MCF 10A (cell line): ENCODE measurements at regions of chr11 and their contacts with region 1.

Region 1: DNA sequence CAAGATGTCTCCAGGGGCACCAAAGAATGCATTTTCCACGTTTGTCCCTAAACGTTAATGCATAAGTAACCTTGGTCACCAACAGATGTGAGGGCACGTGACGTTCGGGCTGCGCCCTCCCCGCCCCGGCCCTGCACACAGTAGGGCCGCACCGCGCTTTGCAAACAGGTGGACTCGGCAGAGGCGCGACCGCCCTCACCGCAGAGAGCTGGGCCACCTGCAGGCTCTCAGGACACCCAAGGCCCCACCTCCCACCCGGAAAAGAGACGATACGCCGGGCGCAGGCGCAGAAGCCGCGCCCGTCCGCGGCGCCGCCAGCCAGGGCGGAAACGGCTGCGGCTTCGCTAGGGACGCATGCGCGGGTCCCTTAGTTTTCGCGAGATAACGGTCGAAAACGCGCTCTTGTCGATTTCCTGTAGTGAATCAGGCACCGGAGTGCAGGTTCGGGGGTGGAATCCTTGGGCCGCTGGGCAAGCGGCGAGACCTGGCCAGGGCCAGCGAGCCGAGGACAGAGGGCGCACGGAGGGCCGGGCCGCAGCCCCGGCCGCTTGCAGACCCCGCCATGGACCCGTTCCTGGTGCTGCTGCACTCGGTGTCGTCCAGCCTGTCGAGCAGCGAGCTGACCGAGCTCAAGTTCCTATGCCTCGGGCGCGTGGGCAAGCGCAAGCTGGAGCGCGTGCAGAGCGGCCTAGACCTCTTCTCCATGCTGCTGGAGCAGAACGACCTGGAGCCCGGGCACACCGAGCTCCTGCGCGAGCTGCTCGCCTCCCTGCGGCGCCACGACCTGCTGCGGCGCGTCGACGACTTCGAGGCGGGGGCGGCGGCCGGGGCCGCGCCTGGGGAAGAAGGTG is at the start of gene FADD:
- DNase-seq: peak; percentile 95
- H3K4me3 Mint-ChIP-seq: peak within 1 kb of the TSS; percentile 83
- H3K27ac Mint-ChIP-seq: peak within 1 kb of the TSS; percentile 83
- H3K4me1 Mint-ChIP-seq: peaks cover 26% of the 10 kb centered on the region
- H3K27me3 Mint-ChIP-seq: no peaks in the 10 kb centered on the region
- CTCF ChIP-seq: no peak
- total RNA-seq, gene FADD: 37.1 and 44.1 TPM in 2 replicates

Region 2: DNA sequence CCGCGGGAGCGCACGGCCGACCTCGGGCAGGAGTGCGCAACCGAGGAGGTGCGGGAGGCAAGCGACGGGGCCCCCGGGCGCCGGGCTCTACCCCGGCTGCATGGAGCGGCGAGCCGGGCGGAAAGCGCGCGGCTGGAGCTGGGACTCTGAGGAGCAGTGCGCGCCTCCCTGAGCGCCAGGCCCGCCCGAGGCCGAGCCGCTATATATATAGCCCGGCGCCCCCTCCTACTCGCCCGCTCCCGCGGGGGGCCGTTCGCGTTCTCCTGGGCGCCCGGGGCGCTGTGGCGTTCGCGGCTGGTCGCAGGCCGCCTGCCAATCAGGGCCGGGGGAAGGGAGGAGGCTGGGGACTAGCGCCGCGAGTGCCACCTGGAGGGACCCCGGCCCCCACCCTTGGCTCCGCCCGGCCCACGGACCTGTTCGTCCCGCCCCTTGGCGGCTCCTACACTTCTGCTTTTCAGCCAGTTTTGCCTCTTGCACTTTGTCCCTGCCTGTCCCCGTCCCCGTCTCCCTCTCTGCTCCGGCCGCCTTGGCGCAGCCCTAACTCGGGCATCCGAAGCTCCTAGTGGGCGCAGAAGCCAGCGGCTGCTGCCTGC is 427.9 kb before region 1 on chr11 and contains the start of gene FGF4:
- CTCF ChIA-PET with region 1: no interaction called
- POLR2A ChIA-PET with region 1: no interaction called
- intact Hi-C with region 1: no loop called
- DNase-seq: no peak
- H3K4me3 Mint-ChIP-seq: no peak within 1 kb of the TSS
- H3K27ac Mint-ChIP-seq: no peak within 1 kb of the TSS
- H3K4me1 Mint-ChIP-seq: no peaks in the 10 kb centered on the region
- H3K27me3 Mint-ChIP-seq: peaks cover 27% of the 10 kb centered on the region
- CTCF ChIP-seq: no peak
- total RNA-seq, gene FGF4: not detected in 2 replicates

Region 3: DNA sequence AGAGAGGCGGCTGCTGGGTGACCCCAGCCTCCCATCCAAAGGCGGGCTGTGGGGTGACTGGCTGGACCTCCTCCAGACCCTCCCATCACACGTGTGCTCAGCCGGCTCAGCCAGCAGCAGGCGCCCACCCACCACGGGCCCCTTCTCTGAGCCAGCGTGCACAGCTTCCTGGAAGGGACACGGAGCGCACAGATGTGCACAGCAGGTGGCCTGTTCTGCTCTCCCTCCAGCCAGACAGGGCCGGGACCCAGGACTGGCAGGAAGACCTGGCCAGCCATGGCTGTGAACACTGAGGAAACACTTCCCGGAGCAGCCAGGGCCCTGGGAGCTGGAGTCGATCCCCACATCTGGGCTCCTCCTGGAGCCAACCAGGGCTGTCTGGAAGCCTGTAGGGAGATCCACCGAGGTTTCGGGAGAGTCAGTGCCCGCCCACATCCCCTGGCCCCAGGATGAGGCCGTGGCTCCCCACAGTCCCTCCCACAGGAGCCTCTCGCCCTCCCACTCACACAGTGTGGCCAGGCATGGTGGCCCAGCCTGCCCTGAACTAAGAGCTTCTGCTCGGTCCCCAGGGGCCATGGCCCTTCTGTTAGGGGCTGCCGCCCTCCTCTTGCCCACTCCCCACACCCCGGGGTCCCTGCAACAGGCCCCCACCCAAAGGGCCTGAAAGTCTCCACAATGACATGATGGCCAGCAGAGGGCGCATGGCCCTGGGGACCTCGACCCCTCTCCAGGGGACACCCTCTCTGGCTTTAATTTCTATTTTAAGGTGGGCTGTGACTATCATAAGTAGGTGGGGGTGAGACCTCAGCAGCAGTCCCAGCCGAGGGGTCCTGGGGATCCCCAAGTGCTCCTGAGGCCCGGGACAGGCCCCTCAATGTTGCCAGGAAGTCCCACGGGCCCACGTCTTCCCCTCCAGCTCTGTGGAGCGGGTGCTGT is 293.3 kb before region 1 on chr11:
- CTCF ChIA-PET with region 1: interaction called, 19 read pairs
- POLR2A ChIA-PET with region 1: no interaction called
- intact Hi-C with region 1: no loop called
- DNase-seq: no peak
- H3K4me3 Mint-ChIP-seq: no peak overlapping the region
- H3K27ac Mint-ChIP-seq: no peak overlapping the region
- H3K4me1 Mint-ChIP-seq: peaks cover 1% of the 10 kb centered on the region
- H3K27me3 Mint-ChIP-seq: peaks cover 12% of the 10 kb centered on the region
- CTCF ChIP-seq: peak; percentile 78

Region 4: DNA sequence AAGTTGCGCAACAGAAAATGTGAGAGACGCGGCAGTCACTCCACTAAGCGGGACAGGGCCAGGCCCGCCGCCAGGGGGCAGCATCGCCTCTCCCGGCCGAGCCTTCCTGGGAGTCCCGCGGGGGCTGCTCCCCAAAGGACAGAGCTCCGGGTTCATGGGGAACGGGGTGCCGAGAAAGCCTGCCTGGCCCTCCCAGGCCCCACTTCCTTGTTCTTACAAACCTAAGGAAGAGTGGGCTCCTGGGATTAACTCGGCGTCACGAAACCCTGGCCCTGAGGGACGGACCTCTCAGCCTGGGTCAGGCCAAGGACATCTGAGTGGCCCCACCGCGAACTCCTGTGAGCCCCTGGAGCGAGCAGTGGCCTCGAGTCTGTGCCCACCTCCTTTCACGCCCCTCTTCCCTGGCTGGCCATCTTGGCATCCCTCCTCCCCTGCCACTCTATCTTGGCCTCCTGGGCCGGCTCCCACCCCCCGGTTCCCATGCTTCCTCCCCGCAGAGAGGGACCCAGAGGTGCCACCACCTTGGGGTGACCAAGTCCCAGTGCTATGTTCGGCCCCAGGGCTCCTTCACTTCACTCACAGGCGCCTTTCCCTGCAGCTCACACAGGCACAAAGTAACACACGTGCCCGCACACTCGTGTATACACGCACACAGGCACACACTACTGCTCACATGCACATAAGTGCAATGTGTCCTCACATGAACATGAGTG is 284.0 kb before region 1 on chr11:
- CTCF ChIA-PET with region 1: interaction called, 27 read pairs
- POLR2A ChIA-PET with region 1: interaction called, 3 read pairs
- intact Hi-C with region 1: no loop called
- DNase-seq: peak; percentile 70
- H3K4me3 Mint-ChIP-seq: no peak overlapping the region
- H3K27ac Mint-ChIP-seq: no peak overlapping the region
- H3K4me1 Mint-ChIP-seq: peaks cover 15% of the 10 kb centered on the region
- H3K27me3 Mint-ChIP-seq: peaks cover 25% of the 10 kb centered on the region
- CTCF ChIP-seq: peak; percentile 93

Region 5: DNA sequence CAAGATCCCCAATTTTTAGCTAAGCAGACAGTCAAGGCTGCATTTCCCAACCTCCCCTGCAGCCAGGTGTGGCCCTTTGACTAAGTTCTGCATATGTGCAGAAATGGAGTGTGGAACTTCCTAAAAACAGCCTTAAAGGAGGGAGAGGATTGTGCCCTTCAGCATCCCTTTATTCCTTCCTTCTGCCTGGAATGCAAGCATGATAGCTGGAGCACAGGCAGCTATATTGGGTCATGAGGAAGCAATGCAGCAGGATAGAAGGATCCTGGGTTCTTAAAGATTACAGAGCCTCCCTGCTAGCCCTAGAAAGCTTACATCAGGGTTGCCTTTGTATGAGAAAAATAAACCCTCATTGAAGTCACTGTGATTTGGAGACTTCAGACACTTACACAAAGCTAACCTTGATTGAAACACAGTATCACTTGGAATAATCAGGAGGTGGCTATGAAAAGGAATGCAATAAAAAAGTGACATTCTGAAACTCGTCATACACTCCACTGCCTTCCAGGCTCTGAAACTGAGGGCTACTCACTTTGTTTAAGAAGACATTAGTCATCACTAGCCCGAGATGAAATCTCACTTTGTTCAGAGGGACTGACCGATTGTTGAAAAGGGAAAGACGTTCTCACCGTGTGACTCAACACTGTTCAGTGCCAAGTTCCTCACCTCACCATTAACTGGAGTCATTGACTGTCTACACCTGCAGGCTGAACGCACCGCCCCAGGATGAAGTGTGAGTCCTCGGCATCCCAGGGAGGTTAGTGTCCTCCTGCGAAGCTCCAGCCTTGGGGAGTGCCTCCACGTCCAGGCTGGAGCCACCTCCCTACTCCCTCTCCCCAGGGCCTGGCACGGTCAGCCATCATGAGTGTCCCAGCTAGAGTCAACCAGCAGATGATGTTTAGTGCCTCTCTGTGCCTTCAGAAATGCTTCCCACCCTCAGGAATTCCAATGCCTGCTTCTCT is 30.2 kb after region 1 on chr11:
- CTCF ChIA-PET with region 1: interaction called, 3 read pairs
- POLR2A ChIA-PET with region 1: interaction called, 21 read pairs
- intact Hi-C with region 1: no loop called
- DNase-seq: peak; percentile 99
- H3K4me3 Mint-ChIP-seq: peak overlapping the region; percentile 44
- H3K27ac Mint-ChIP-seq: peak overlapping the region; percentile 85
- H3K4me1 Mint-ChIP-seq: peaks cover 16% of the 10 kb centered on the region
- H3K27me3 Mint-ChIP-seq: no peaks in the 10 kb centered on the region
- CTCF ChIP-seq: no peak

Region 6: GRCh38 chr11:70270104-70270876 is 67.2 kb after region 1 on chr11 and contains the start of gene PPFIA1:
- CTCF ChIA-PET with region 1: interaction called, 4 read pairs
- POLR2A ChIA-PET with region 1: interaction called, 34 read pairs
- intact Hi-C with region 1: loop called (anchors 1 kb)
- DNase-seq: peak; percentile 95
- H3K4me3 Mint-ChIP-seq: peak within 1 kb of the TSS; percentile 85
- H3K27ac Mint-ChIP-seq: peak within 1 kb of the TSS; percentile 88
- H3K4me1 Mint-ChIP-seq: peaks cover 18% of the 10 kb centered on the region
- H3K27me3 Mint-ChIP-seq: no peaks in the 10 kb centered on the region
- CTCF ChIP-seq: no peak
- total RNA-seq, gene PPFIA1: 78.4 and 78.8 TPM in 2 replicates